Stomach (tissue), 19 donors: ENCODE measurements at regions of chr12 and their contacts with region 1.

Region 1: GRCh38 chr12:105420659-105421240 is 90.3 kb downstream of the C12orf75 start:
- DNase-seq: peak; percentile 74 to 90
- H3K4me3 ChIP-seq: no peak overlapping the region
- H3K27ac ChIP-seq: no peak overlapping the region
- H3K4me1 ChIP-seq: no peaks in the 10 kb centered on the region
- H3K27me3 ChIP-seq: no peaks in the 10 kb centered on the region
- CTCF ChIP-seq: peak in 5 of 7 experiments; percentile 76 to 91 (median 89)
- EP300 ChIP-seq: no peak
- POLR2A ChIP-seq: no peak

Region 2: DNA sequence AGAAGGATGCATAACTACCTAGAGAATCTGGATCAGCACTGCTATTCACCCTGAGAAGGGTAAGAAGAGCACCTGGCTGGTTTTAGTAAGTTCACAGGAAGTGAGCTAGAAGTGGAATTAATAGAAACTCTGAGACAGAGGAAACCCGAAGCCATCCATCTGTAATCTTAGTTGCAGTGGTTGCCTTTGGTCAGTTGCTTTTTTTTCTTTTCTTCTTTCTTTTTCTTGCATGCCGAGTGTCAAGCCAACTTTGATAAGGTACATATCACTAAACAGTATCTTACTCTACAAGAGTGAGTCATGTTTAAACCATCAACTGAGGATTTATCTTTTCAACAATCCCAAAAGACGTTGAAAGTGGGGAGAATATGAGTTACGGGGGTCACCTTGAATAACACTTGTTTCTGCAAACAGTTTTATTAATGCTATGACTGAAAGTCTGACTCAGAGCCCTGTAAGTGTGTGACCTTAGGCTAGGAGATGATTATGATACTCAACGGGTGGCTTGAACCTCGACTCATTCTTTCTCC is 63.5 kb before region 1 on chr12:
- intact Hi-C with region 1: no loop called
- DNase-seq: no peak
- H3K4me3 ChIP-seq: no peak overlapping the region
- H3K27ac ChIP-seq: no peak overlapping the region
- H3K4me1 ChIP-seq: peaks cover 16 to 25% (median 18%) of the 10 kb centered on the region in 4 donors
- H3K27me3 ChIP-seq: no peaks in the 10 kb centered on the region
- CTCF ChIP-seq: no peak
- EP300 ChIP-seq: no peak
- POLR2A ChIP-seq: no peak

Region 3: GRCh38 chr12:106136263-106136662 is 715.5 kb after region 1 on chr12:
- intact Hi-C with region 1: no loop called
- DNase-seq: peak; percentile 90 to 94
- H3K4me3 ChIP-seq: peak overlapping the region; percentile 26 to 79 (median 74)
- H3K27ac ChIP-seq: peak overlapping the region; percentile 3 to 97 (median 69)
- H3K4me1 ChIP-seq: peaks cover 43 to 89% (median 64%) of the 10 kb centered on the region in 4 donors
- H3K27me3 ChIP-seq: peaks cover 0 to 45% (median 12%) of the 10 kb centered on the region in 3 donors
- CTCF ChIP-seq: peak in 6 of 7 experiments; percentile 24 to 85 (median 64)
- EP300 ChIP-seq: no peak
- POLR2A ChIP-seq: no peak

Region 4: DNA sequence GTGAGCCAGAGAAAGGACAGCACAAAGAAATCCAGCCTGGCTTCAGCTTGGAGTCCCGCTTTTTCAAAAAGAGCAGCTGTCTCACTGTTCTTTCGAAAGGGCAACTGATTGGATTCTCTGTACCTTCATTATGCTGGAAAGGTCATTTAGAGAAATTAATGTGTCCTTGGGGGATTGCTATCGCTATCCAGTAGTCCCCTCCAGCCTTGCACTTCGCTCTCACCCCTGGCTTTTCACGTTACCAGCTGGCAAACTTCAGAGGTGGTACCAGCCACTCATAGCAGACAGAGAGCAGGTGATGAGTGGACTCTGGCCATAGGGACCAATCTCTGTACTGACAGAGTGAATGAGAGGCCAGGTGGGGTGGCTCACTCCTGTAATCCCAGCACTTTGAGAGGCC is 729.8 kb after region 1 on chr12:
- intact Hi-C with region 1: loop called (anchors 5 kb)
- DNase-seq: no peak
- H3K4me3 ChIP-seq: no peak overlapping the region
- H3K27ac ChIP-seq: no peak overlapping the region
- H3K4me1 ChIP-seq: peaks cover 4 to 30% (median 14%) of the 10 kb centered on the region in 4 donors
- H3K27me3 ChIP-seq: no peaks in the 10 kb centered on the region
- CTCF ChIP-seq: no peak
- EP300 ChIP-seq: no peak
- POLR2A ChIP-seq: no peak

Region 5: GRCh38 chr12:106223485-106224354 is 803.0 kb after region 1 on chr12:
- intact Hi-C with region 1: loop called (anchors 5 kb)
- DNase-seq: peak; percentile 76 to 85
- H3K4me3 ChIP-seq: no peak overlapping the region
- H3K27ac ChIP-seq: no peak overlapping the region
- H3K4me1 ChIP-seq: peaks cover 0 to 22% (median 15%) of the 10 kb centered on the region in 4 donors
- H3K27me3 ChIP-seq: no peaks in the 10 kb centered on the region
- CTCF ChIP-seq: peak in 5 of 7 experiments; percentile 90 to 94 (median 92)
- EP300 ChIP-seq: no peak
- POLR2A ChIP-seq: no peak